Activated naive CD8-positive, alpha-beta T cell treated with anti-CD3 and anti-CD28 coated beads, Interleukin-2, amount 10 ng/mL, durations not matched to agents 7 days and 5 days (primary cell): ENCODE measurements at regions of chr20 and their contacts with region 1.

Region 1: DNA sequence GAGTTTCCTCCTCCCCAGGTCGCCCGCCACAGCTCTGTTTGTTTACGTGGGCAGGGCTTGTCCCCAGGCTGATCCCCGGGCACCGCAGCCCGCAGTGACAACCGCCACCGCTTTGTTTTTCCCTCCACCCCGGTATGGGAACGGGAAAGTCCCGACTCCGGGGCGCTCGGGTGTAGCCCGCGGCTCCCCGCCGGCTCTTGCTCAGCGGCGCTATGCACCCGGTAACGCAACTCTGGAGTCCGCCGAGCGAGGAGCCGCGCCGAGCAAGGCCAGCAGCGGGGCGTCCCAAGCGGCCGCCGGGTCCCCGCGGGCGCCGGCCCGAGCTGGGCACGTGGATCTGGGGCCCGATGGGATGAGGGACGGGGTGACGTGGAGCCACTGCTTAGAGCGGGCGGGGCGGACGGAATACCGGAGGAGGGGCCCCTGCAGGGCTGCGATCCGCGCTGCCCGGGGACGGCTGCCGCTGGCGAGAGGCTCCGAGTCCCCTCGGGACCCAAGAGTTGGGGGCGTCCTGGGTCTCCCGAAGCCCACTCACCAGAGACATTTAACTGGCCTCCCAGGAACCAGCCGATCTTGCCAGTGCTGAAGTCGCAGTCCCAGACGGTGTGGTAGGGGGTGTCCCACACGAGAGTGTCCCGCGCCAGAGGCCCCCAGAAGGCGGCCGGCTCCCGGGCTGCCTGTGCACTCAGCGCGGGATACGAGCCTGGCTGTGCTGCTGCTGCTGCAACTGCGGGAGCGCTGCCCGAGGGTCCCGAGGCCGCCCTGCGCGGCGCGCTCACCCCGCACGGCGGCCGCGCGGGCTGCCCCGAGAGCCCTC is 497 bp downstream of the ACSS1 start:
- DNase-seq: peak; percentile 81
- ATAC-seq: peak; percentile 46
- H3K4me3 Mint-ChIP-seq: peak overlapping the region; percentile 83
- H3K27ac Mint-ChIP-seq: peak overlapping the region; percentile 82
- H3K4me1 Mint-ChIP-seq: peaks cover 31% of the 10 kb centered on the region
- H3K27me3 Mint-ChIP-seq: peaks cover 16% of the 10 kb centered on the region

Region 2: DNA sequence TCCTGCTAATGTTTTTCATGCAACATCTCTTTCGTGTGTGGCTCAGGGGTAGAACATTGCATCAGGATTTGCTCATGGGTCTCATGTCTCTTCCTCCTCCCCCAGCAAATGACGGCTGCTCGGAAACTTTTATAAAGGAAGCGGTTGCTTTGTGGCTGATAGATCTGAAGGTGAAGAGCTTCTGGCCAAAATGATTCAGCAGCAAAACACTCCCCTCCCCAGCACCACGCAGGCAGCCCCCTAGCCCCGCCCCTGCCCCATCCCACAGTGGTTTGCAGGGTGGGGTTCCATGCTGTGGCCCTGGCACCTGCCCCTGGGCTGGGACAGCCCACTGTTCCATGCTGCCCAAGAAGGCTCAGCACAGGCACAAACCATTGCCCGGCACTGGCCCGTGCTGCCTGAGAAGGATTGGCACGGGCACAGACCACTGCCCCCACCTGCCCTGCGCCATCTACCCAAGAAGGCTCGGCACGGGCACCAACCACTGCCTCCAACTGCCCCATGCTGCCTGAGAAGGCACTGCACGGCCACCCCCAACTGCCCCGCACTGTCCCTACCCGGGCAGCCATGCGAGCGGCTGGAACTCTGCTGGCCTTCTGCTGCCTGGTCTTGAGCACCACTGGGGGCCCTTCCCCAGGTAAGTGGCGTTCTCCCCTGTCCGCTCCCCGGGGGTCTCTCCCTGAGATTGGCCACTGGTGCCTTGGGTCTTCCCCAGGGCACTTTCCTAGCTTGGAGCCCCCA is 108.3 kb before region 1 on chr20 and contains the start of gene CST7:
- POLR2A ChIA-PET with region 1: interaction called, 15 read pairs
- DNase-seq: peak; percentile 81
- ATAC-seq: peak; percentile 92
- H3K4me3 Mint-ChIP-seq: peak within 1 kb of the TSS; percentile 87
- H3K27ac Mint-ChIP-seq: peak within 1 kb of the TSS; percentile 99
- H3K4me1 Mint-ChIP-seq: peaks cover 49% of the 10 kb centered on the region
- H3K27me3 Mint-ChIP-seq: no peaks in the 10 kb centered on the region
- total RNA-seq, gene CST7: 92.0 to 92.4 TPM

Region 3: DNA sequence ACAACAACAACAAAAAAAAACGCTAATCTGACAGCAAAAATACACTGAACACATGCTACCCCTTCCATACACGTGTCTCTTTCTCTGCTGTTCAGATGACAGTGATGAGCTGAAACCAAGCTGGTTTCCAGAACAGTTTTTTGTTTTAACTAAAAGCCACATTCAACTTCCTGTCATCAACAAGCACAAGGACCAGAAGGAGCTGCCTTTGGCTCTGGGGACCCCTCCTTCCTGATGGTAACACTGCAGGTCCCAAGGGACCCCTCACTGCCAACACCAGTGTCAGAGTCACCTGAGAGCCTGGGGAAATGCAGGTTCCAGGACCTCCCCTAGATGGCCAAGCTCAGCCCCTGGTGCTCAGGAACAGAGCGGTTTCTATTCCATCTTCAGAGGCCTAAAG is 102.4 kb before region 1 on chr20:
- POLR2A ChIA-PET with region 1: interaction called, 15 read pairs
- DNase-seq: peak; percentile 45
- ATAC-seq: peak; percentile 74
- H3K4me3 Mint-ChIP-seq: peak overlapping the region; percentile 57
- H3K27ac Mint-ChIP-seq: peak overlapping the region; percentile 80
- H3K4me1 Mint-ChIP-seq: peaks cover 34% of the 10 kb centered on the region
- H3K27me3 Mint-ChIP-seq: no peaks in the 10 kb centered on the region

Region 4: GRCh38 chr20:24992487-24993205 is 64.8 kb before region 1 on chr20 and contains the start of gene APMAP:
- POLR2A ChIA-PET with region 1: interaction called, 32 read pairs
- DNase-seq: peak; percentile 98
- ATAC-seq: peak; percentile 92
- H3K4me3 Mint-ChIP-seq: peak within 1 kb of the TSS; percentile 97
- H3K27ac Mint-ChIP-seq: peak within 1 kb of the TSS; percentile 95
- H3K4me1 Mint-ChIP-seq: peaks cover 43% of the 10 kb centered on the region
- H3K27me3 Mint-ChIP-seq: peaks cover 5% of the 10 kb centered on the region
- total RNA-seq, gene APMAP: 60.7 to 64.6 TPM

Region 5: GRCh38 chr20:25042531-25043498 is 14.6 kb before region 1 on chr20:
- POLR2A ChIA-PET with region 1: interaction called, 61 read pairs
- DNase-seq: peak; percentile 64
- ATAC-seq: peak; percentile 95
- H3K4me3 Mint-ChIP-seq: peak overlapping the region; percentile 56
- H3K27ac Mint-ChIP-seq: peak overlapping the region; percentile 92
- H3K4me1 Mint-ChIP-seq: peaks cover 20% of the 10 kb centered on the region
- H3K27me3 Mint-ChIP-seq: no peaks in the 10 kb centered on the region